ENCODE measurements at regions of chr3 and their contacts with region 1.

Region 1: DNA sequence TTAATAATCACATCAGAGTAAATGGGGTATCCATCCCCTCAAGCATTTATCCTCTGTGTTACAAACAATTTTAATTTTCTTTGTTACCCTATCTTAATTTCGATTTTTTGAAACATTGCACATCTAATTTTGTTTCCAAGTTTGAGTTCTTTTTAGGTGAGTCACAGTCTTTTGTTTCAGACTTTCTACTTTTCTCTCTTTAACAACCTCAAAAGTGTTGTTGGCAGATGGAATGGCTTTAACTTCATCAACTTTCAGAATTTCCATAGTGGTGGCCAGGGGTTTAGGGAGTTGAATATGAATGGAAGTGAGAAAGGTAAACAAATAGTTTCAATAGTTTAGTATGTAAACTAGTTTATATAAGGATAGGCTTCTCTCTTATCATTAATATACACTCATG is 223.0 kb upstream of the MLF1 start:
- H3K4me3 Mint-ChIP-seq: no peak overlapping the region
- H3K27ac Mint-ChIP-seq: no peak overlapping the region
- H3K4me1 Mint-ChIP-seq: peaks cover 14% of the 10 kb centered on the region
- H3K27me3 Mint-ChIP-seq: no peaks in the 10 kb centered on the region

Region 2: DNA sequence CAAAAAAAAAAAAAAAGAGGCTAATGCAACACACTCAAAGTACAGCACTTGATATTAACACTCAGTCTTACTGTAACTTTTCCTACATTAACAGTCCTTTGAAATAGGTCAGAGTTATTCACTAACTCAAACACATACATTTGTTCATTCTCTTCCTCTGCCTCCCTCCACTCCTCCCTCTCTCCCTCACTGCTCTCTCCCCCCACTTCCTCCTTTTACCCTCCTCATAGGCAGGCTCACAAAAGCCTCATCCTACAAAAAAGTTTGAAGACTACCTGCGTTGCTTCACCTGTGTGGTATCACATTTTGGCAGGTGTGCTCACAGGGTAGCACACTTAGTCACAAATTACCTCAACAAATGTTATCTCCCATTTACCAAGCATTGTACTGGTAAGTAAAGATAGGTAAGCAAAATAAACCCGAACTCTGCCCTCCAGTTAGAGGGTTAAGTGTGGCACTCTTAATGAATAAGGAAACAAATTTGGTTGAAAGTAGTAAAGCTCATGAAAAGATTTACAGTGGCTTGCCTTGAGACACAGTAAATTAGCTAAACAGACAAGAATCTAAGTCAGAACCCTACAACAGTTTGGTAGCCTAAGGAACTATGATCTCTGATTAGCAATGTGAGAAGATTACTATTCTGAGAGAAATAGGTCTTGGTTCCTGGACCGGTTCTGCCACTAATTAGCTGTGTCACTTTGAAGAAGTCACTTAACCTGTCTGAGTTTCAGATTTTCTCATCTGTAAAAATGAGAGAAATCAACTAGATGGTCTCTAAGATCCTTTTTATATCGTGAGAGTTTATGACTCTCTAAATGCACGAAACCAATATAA is 72.1 kb after region 1 on chr3:
- intact Hi-C with region 1: loop called (anchors 5 kb)
- H3K4me3 Mint-ChIP-seq: no peak overlapping the region
- H3K27ac Mint-ChIP-seq: no peak overlapping the region
- H3K4me1 Mint-ChIP-seq: peaks cover 19% of the 10 kb centered on the region
- H3K27me3 Mint-ChIP-seq: no peaks in the 10 kb centered on the region